ENCODE measurements at regions of chr10 and their contacts with region 1.

Region 1: DNA sequence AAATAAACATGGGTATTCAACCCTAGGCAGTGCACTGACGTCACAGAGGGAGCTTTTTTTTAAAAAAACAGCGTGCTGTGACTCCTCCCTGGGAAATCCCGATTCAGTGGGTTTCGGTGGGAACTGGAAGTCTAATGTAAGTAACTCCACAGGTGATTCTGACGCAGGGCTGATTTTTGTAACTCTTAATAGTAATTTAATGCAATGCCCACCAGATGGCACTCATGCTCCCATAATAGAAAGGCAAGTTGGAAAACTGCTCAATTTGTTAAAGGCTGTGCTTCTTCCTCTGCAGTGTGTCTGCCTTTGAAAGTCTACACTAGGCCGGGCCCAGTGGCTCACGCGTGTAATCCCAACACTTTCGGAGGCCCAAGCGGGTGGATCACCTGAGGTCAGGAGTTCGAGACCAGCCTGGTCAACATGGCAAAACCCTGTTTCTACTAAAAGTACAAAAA is 10.9 kb upstream of the RSU1 start:
- DNase-seq: peak; percentile 77
- ATAC-seq: peak; percentile 95
- H3K4me3 Mint-ChIP-seq: no peak overlapping the region
- H3K27ac Mint-ChIP-seq: no peak overlapping the region
- H3K4me1 Mint-ChIP-seq: peaks cover 2% of the 10 kb centered on the region
- H3K27me3 Mint-ChIP-seq: no peaks in the 10 kb centered on the region

Region 2: DNA sequence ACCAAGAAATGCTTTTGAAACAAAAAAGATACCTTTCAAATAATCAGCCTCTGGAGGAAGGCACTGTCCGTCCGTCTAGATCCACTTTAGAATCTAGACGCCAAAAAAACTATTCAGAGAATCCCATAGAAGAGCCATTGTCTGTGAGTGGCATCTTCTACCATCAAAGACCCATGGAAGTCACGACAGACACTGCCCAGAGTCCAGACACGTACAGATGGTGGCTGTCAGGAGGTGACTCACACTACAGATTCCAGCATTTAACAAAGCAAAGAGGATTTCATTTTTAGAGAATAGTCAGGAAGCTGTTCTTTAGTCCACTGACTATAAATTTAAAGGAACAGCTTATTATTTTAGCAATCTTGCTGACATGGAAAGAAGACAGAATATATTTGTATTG is 318.1 kb before region 1 on chr10:
- CTCF ChIA-PET with region 1: no interaction called
- POLR2A ChIA-PET with region 1: no interaction called
- intact Hi-C with region 1: no loop called
- DNase-seq: no peak
- ATAC-seq: no peak
- H3K4me3 Mint-ChIP-seq: no peak overlapping the region
- H3K27ac Mint-ChIP-seq: no peak overlapping the region
- H3K4me1 Mint-ChIP-seq: no peaks in the 10 kb centered on the region
- H3K27me3 Mint-ChIP-seq: no peaks in the 10 kb centered on the region

Region 3: GRCh38 chr10:17257466-17258321 is 429.6 kb after region 1 on chr10:
- CTCF ChIA-PET with region 1: interaction called, 7 read pairs
- POLR2A ChIA-PET with region 1: no interaction called
- intact Hi-C with region 1: loop called (anchors 1 kb)
- DNase-seq: peak; percentile 66
- ATAC-seq: peak; percentile 86
- H3K4me3 Mint-ChIP-seq: peak overlapping the region; percentile 9
- H3K27ac Mint-ChIP-seq: peak overlapping the region; percentile 0
- H3K4me1 Mint-ChIP-seq: peaks cover 7% of the 10 kb centered on the region
- H3K27me3 Mint-ChIP-seq: peaks cover 3% of the 10 kb centered on the region

Region 4: DNA sequence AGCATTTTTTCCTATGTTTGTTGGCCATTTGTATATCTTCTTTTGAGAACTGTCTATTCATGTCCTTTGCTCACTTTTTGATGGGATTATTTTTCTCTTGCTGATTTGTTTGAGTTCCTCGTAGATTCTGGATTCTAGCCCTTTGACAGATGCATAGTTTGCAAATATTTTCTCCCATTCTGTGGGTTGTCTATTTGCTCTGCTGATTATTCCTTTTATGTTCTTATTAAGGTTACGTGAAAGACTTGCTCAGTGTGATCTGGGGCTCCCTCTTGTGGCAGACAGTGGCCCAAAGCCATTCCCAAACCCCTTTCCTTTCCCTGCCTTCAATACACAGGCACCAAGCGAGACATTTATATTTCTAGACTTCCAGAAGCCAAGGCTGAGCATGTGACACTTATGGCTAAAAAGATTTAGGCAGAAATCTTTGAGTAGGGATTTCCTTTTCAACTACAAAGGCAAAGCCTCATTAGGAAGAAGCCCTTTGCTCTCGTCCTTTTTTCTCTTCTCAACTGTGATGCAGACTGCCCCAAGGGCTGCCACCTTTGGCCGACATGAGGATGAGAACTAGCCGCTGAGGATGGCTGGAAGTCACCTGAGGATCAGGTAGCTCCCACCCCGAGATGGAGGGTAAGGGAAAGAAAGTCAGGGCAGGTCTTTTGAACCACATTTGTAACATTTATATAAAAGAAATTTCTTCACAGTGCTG is 602.7 kb after region 1 on chr10:
- CTCF ChIA-PET with region 1: no interaction called
- POLR2A ChIA-PET with region 1: no interaction called
- intact Hi-C with region 1: loop called (anchors 2 to 5 kb)
- DNase-seq: peak; percentile 77
- ATAC-seq: no peak
- H3K4me3 Mint-ChIP-seq: no peak overlapping the region
- H3K27ac Mint-ChIP-seq: no peak overlapping the region
- H3K4me1 Mint-ChIP-seq: peaks cover 55% of the 10 kb centered on the region
- H3K27me3 Mint-ChIP-seq: peaks cover 1% of the 10 kb centered on the region

Region 5: DNA sequence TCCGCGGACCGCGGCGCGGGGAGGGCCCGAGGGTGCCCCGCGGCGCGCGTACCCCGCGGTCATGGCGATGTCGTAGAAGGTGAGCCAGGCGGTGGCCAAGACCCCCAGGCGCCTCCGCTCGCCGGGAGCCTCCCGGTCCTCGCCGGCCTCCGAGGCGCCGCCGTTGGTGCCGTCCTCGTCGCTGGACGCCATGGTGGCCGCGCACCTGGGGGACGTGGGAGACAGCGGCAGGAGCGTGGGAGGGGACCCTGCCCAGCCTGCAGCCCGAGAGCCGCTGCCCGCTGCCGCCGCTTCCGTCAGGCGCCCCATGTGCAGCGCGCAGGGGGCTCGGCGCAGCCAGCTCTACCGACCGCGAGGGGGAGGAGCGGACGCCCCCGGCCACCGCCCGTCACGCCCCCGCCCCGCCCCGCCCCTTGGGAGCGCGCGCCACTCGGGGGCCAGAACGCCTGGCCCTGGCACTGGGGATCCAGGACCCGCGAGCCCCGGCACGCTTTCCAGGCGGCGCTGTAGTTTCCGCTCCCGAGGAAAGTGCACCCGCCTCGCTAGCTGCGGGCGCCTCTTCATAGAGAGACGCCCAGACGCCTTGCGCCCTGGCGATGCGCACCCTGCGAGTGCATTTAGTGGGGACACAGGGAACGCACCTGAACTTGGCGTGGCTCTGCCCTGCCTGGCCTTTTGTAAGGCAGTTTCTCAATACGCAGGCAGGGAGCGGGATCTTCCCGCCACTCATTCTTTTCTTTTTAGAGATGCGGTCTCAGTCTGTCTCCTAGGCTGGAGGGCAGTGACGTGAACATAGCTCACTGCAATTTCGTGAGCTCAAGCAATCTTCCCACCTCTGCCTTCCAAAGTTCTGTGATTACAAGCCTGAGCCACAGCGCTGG is 789.1 kb after region 1 on chr10 and contains the start of gene HACD1:
- CTCF ChIA-PET with region 1: no interaction called
- POLR2A ChIA-PET with region 1: no interaction called
- intact Hi-C with region 1: loop called in 1 of 2 experiments (anchors 10 kb)
- DNase-seq: peak; percentile 74
- ATAC-seq: peak; percentile 75
- H3K4me3 Mint-ChIP-seq: peak within 1 kb of the TSS; percentile 78
- H3K27ac Mint-ChIP-seq: peak within 1 kb of the TSS; percentile 55
- H3K4me1 Mint-ChIP-seq: peaks cover 5% of the 10 kb centered on the region
- H3K27me3 Mint-ChIP-seq: peaks cover 13% of the 10 kb centered on the region
- total RNA-seq, gene HACD1: 1.7 to 2.2 TPM

Region 6: GRCh38 chr10:17742918-17743317 is 914.8 kb after region 1 on chr10:
- CTCF ChIA-PET with region 1: no interaction called
- POLR2A ChIA-PET with region 1: no interaction called
- intact Hi-C with region 1: loop called in 1 of 2 experiments (anchors 2 kb)
- DNase-seq: peak; percentile 83
- ATAC-seq: peak; percentile 30
- H3K4me3 Mint-ChIP-seq: no peak overlapping the region
- H3K27ac Mint-ChIP-seq: no peak overlapping the region
- H3K4me1 Mint-ChIP-seq: peaks cover 5% of the 10 kb centered on the region
- H3K27me3 Mint-ChIP-seq: no peaks in the 10 kb centered on the region

Measured in activated CD4-positive, alpha-beta T cell treated with anti-CD3 and anti-CD28 coated beads for 36 hours (primary cell).